Posterior cingulate gyrus (tissue), 11 donors: ENCODE measurements at regions of chr1 and their contacts with region 1.

Region 1: DNA sequence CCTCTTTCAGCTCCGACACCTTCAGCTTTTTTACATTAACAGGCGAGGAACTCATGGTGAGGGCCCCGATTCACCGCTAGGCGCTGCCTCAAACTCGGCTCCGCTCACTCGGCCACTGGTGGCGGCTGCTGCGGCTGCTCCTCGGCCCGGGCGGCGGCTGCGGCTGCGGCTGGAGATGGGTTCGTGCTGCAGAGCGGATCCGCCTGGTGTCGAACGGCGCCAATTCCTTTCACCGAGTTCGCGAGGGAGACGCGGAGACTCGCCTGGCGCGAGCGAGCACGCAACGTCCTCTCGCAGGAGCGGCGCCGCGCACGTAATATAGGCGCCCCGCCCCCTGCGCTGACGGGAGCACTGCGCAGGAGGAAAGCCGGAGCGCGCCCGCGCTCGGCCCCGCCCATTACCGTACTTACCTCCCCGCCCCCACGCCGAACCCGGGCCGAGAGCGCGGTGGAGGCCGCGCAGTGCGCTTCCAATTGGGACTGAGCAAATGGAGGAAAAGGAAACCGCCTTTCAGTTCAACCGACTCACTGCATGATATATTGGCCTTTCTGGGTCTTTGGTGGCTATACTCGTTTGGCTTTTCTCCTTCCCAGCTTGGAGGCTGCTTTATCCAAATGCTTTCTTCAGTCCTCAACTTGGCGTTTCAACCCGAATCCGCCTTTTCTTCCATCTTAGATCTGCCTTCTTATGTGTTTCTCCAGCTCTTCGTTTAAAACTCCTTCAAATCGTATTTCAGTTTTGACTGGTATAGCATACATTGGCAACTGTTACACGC is at the start of gene HNRNPU:
- DNase-seq: peak; percentile 91 to 100 (median 96)

Region 2: DNA sequence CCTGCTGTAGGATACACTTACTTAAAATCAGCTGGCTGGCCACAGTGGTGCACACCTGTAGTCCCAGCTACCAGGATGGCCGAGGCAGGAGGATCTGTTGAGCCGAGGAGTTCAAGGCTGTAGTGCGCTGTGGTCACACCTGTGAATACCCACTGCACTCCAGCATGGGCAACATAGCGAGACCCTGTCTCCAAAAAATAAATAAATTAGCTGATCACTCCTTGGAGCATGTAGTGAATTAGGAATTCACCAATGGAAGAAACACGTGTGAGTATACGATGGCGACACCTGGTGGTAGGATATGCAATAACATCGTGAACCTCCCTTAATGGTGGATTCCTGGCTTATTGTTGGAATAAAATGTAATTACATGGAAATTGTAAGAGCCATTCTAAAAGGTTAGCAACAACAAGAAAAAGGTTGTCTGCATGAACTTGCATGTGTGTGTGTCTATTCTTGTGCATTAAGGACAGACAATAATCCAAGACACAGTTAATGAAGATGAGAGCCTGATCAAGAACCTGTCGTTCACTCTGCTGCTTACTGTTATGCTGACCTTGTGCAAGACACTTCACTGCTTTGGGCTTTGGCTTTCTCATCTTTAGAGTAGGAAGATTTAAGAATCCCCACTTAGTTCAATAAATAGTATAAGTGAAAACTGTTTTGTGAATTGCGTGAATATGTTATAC is 67.6 kb before region 1 on chr1:
- intact Hi-C with region 1: loop called (anchors 5 kb)
- DNase-seq: peak in 6 of 10 donors; percentile 18 to 81 (median 70)

Region 3: DNA sequence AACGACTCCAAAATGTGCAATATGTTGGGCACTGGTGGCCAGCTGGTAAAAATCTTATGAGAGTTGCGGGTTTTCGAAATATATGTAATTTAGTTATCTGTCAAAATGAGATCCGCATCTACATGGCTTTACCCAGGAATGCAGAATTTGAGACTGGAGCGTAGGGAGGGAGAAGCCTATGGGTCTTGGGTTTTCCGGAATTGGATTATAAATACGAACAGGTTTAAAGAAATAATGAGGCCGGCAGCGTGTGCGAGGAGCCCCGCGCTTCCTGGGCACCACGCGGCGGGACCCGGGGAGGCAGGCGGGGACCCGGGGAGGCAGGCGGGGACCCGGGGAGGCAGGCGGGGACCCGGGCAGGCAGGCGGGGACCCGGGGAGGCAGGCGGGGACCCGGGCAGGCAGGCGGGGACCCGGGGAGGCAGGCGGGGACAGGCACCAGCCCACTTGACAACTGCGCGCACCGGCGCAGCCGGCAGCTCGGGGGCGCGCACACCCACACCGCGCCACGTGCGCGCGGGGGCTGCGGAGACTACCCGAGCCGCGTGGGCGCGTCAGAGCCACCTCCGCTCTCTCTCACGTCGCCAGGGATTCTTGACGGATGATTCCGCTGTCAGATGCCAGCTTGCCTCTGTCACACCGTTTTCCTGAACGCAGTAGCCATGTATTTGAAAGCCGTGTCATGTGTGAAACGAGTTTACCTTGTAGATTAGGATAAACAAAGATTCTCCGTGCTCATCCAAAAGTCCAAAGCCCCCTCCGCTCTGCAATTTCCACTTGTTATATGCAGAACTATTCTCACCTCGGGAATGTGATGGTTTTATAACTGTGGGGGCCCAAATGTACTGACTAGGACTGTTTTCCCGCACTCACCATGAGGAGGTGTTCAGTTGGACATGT is 54.2 kb after region 1 on chr1:
- intact Hi-C with region 1: loop called (anchors 5 kb)
- DNase-seq: peak; percentile 14 to 94 (median 49)

Region 4: DNA sequence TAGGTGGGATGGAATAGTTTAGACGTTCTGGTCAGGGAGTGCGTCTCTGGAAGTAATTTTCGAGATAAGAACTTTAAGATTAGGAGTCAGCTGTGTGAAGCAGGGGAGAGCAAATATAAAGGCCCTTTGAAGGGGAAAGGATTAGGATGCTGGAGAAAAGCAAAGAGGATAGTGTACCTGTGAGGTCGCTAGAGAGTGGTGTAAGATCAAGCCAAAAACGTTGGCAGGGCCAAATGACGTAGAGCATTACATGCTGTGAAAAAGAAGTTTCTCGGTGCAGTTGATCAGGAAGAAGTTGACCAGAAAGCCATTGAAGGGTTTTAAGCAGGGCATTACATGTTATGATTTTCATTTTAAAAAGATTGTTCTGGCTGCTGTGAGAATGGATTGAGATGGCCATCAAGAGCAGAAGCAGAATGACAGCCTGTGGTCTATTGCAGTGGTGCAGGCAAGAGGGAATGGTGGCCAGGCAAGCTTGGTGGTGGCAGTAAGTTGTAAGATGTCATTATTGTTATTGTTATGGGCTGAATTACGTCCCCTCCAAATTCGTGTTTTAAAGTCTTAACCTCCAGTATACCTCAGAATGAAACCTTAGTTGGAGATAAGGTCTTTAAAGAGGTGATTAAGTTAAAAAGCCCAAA is 176.7 kb after region 1 on chr1:
- intact Hi-C with region 1: loop called (anchors 2 kb)
- DNase-seq: no peak